Aorta (tissue), 5 donors: ENCODE measurements at regions of chr14 and their contacts with region 1.

Region 1: GRCh38 chr14:68307014-68307789 is 485.7 kb downstream of the ZFP36L1 start:
- DNase-seq: no peak
- ATAC-seq: peak; percentile 54
- H3K4me3 ChIP-seq: no peak overlapping the region
- H3K27ac ChIP-seq: peak overlapping the region; percentile 71 to 76
- H3K4me1 ChIP-seq: peaks cover 0 to 4% of the 10 kb centered on the region in 2 donors
- H3K27me3 ChIP-seq: no peaks in the 10 kb centered on the region

Region 2: DNA sequence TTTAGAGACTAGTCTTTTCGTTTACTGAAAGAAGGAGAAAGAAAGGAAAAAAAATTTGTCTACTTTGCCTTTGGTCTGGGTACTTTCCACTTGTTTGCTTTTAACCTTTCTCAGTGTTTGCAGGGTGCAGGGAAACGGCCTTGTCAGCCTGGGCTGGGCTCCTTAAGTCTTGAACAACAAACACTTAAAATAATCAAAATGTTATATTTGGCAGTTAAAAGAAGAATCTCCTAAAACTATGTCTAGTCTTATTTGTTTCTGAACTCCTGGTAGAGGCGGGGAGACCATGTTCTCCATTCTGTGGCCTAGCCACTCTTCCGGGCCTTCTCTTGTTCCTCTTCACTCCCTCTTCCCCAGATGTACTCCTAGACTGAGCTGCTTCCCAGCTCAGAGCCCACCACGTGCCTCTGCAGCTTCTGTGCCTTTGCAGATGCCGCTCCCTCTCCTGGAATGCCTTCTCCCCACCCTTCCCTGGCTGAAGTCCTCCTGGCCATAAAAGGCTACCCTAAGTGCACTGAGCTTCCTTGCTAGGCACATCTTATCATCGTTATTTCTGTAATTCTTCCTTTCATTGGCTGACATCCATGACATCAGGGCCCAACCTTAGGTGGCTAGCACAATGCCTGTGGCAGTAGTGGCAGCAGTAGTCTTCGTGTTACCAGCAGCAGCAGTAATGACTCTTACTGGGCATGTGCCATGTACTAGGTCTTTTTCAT is 52.8 kb after region 1 on chr14:
- intact Hi-C with region 1: loop called in 1 of 2 experiments (anchors 5 kb)
- DNase-seq: peak; percentile 82 to 83
- ATAC-seq: peak; percentile 75
- H3K4me3 ChIP-seq: no peak overlapping the region
- H3K27ac ChIP-seq: peak overlapping the region in 1 of 2 donors; percentile 59
- H3K4me1 ChIP-seq: peaks cover 2 to 3% of the 10 kb centered on the region in 2 donors
- H3K27me3 ChIP-seq: no peaks in the 10 kb centered on the region

Region 3: DNA sequence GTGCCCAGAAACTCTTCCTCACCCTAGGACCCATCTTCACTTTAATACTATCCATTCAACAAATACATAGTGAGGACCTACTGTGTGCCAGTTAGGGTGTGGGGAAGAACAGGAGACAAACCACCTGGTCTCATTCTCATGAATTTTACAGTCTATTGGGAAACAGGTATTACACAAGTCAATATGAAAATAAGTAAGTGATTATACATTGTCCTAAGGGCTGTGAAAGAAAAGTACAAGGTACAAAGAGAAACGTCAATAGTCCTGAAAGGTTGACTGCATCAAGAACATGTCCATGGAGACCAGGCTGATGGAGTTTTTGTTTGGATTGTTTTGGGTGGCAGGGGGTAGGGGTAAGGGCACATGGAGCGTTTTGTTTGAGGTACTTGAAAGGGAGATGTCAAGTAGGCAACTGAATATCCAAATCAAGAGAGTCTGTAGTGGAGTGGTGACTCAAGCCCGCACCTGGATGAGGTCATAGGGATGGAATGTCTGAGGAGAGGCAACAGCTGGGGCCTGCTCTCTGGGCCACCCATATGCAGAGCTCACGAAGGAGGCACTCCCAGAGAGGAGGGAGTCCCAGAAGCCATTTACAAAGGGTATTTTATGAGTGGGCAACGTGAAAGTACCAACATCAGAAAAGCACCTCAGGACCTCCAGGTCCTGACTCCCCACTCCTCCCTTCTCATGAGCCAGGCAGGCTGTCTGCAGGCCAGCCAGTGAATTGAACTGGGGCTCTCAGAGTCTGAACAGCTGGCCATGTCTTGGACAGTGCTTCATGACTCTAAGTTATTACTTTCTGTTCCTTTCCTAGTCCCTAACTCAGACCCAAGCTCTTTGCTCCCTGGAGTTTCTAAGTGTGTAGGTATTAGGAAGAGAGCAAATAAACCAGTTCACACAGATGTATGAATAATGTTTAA is 213.7 kb after region 1 on chr14:
- intact Hi-C with region 1: loop called in 1 of 2 experiments (anchors 10 kb)
- DNase-seq: no peak
- ATAC-seq: no peak
- H3K4me3 ChIP-seq: no peak overlapping the region
- H3K27ac ChIP-seq: peak overlapping the region in 1 of 2 donors; percentile 50
- H3K4me1 ChIP-seq: peaks cover 4% of the 10 kb centered on the region in 2 donors
- H3K27me3 ChIP-seq: no peaks in the 10 kb centered on the region